ENCODE measurements at regions of chr7 and their contacts with region 1.

Region 1: GRCh38 chr7:33932832-33933468 is 27.6 kb downstream of the BMPER start:
- DNase-seq: peak; percentile 87
- ATAC-seq: peak; percentile 94
- H3K4me3 Mint-ChIP-seq: no peak overlapping the region
- H3K27ac Mint-ChIP-seq: no peak overlapping the region
- H3K4me1 Mint-ChIP-seq: peaks cover 24% of the 10 kb centered on the region
- H3K27me3 Mint-ChIP-seq: no peaks in the 10 kb centered on the region
- CTCF ChIP-seq: peak; percentile 81

Region 2: DNA sequence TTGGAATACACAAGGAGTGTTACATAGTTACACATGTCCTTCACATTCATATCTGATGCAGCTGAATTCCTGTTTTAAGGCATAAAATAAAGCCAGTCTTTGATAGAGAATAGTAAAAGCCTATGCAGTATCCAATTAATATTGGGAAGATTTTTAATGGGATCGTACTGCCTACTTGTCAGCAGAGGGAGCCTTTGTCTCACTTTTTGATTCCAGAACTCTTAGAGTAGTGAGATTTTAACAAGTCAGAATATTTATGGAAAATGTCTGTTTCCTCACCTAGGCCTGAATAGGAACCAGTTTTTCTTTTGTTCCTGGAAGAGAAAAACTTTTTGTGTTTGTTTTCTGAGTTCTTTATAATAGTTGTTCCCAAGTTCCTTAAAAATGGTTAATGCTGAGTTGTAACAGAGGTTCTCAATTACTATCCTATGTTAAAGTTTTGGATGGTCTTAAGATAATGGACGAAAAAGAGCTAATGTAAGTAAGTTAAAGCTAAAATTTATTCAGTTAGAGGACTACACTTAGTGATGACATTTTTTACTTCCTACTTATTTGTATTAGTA is 689.5 kb before region 1 on chr7:
- CTCF ChIA-PET with region 1: interaction called, 31 read pairs
- POLR2A ChIA-PET with region 1: no interaction called
- DNase-seq: no peak
- ATAC-seq: peak; percentile 69
- H3K4me3 Mint-ChIP-seq: no peak overlapping the region
- H3K27ac Mint-ChIP-seq: no peak overlapping the region
- H3K4me1 Mint-ChIP-seq: peaks cover 4% of the 10 kb centered on the region
- H3K27me3 Mint-ChIP-seq: no peaks in the 10 kb centered on the region
- CTCF ChIP-seq: peak; percentile 34; the same call in 1 of the 2 replicates

Region 3: DNA sequence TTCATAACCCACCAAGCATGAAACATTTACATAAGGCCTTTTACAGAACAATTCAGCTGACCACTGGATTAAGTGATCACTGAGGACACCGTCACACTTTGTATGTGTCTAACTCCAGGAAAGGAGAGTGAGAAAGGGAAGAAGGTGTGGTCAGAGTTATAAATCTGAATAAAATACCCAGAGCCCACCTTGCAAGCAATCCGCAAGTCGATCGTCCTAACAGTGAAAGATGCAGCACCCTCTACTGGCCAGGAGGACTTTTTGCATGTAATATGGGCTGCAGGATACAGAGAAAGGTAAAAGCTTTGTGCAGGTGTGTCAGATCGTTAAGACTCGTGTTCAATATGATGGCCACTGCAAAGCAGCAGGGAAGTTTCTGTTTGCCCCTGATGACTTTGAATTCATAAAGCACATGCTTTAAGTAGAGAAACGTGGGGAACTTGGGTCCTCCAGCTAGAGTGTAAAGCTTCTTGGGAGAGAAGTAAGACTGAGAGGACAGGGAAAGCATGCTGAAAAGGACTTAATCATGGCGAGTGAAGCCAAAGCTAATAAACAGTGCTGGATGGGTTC is 96.1 kb before region 1 on chr7:
- CTCF ChIA-PET with region 1: interaction called, 19 read pairs
- POLR2A ChIA-PET with region 1: no interaction called
- DNase-seq: peak; percentile 56
- ATAC-seq: peak; percentile 67
- H3K4me3 Mint-ChIP-seq: no peak overlapping the region
- H3K27ac Mint-ChIP-seq: no peak overlapping the region
- H3K4me1 Mint-ChIP-seq: 0 out of 2 replicates have a peak, but pooled peaks cover 3% of the 10 kb centered on the region
- H3K27me3 Mint-ChIP-seq: no peaks in the 10 kb centered on the region
- CTCF ChIP-seq: peak; percentile 45

Region 4: GRCh38 chr7:33904681-33905388 is 28.1 kb before region 1 on chr7:
- CTCF ChIA-PET with region 1: interaction called, 70 read pairs
- POLR2A ChIA-PET with region 1: interaction called, 4 read pairs
- DNase-seq: peak; percentile 61
- ATAC-seq: peak; percentile 74
- H3K4me3 Mint-ChIP-seq: peak overlapping the region; percentile 91
- H3K27ac Mint-ChIP-seq: no peak overlapping the region
- H3K4me1 Mint-ChIP-seq: peaks cover 29% of the 10 kb centered on the region
- H3K27me3 Mint-ChIP-seq: peaks cover 61% of the 10 kb centered on the region
- CTCF ChIP-seq: no peak

Region 5: DNA sequence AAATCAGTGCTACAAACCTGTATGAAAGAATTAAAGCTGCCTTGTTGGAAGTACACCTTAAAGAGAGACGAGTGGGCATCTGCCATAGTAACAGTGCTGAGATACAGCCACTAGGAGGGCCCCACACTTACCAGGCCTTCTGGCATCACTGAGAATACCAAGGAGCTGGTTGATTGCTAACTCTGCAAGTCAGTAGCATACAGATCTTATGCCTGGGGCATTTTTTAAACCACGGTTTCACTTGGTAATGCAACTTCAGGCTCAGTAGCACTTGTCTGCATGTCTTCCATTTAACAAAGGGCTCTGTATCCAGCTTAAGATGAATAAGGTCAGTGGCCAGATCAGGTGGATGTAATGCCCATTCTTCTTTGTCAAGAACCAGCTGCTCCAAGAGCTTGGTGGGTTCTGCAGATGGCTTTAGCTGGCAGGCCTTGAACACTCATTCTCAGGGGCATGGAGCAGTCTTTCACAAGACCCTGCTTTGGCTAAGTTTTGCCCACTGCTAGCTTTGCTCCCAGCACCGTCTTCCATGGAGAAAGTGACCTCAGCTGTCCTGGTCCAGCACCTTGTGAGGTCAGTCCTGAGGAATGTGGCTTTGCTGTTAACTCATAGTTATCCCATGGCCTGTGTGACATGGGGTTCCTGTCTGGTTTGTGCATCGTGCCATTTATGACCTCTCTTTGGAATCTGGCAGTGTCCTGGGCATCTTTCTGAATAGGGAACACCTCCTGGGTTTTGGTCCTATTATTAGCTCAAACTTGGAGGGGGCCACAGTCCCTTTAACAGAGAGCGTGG is 40.5 kb after region 1 on chr7:
- CTCF ChIA-PET with region 1: interaction called, 10 read pairs
- POLR2A ChIA-PET with region 1: no interaction called
- DNase-seq: no peak
- ATAC-seq: no peak
- H3K4me3 Mint-ChIP-seq: no peak overlapping the region
- H3K27ac Mint-ChIP-seq: no peak overlapping the region
- H3K4me1 Mint-ChIP-seq: peaks cover 23% of the 10 kb centered on the region
- H3K27me3 Mint-ChIP-seq: no peaks in the 10 kb centered on the region; the same call in 1 of the 2 replicates
- CTCF ChIP-seq: no peak